Right lobe of liver (tissue), 6 donors: ENCODE measurements at regions of chr4 and their contacts with region 1.

Region 1: DNA sequence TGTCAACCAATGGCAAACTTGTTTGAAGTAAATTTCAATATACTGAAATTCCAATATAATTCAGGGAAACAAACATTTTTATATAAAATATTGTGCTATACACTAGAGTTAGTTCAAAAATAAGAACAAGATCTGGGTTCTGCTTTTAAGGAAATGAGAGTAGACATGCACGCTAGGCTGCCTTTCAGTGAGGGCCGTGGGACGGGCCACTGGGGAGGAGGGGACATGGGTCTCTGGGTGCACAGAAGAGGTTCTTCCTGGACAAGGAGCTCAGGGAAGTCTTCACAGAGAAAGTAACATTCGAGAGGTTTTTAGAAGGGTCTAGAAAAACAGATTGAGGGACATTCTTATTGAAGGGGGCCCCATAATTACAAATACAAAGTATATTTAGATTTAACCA is 64.4 kb downstream of the SHROOM3 start:
- DNase-seq: no peak
- ATAC-seq: no peak
- H3K4me3 ChIP-seq: no peak overlapping the region
- H3K27ac ChIP-seq: peak overlapping the region; percentile 47 to 90 (median 82)
- H3K4me1 ChIP-seq: peaks cover 0 to 56% (median 13%) of the 10 kb centered on the region in 4 donors
- H3K27me3 ChIP-seq: no peaks in the 10 kb centered on the region
- CTCF ChIP-seq: no peak
- POLR2A ChIP-seq: no peak

Region 2: DNA sequence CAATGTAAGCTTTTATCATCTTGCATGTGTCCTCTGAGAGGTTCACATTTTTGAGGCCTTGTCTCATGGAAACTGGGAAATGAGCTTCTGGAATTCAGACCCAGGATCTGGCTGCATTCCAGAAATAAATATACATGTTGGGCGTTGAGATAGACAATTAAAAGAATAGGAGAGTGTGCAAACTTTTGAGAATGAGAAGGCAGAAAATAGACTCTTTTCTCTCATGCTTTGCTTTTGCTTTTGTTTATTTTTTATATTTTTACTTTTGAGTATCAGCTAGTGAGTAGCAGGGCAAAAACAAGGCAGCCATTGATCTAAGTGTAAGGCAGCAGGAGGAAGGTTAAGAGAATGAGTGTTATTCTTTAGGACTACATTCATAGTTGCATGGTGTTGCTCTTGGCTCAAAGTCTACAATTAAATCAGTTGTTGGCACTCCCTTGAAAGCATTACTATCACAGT is 52.0 kb before region 1 on chr4:
- intact Hi-C with region 1: loop called in 1 of 2 experiments (anchors 10 kb)
- DNase-seq: no peak
- ATAC-seq: no peak
- H3K4me3 ChIP-seq: no peak overlapping the region
- H3K27ac ChIP-seq: peak overlapping the region in 1 of 3 donors; percentile 47
- H3K4me1 ChIP-seq: peaks cover 0 to 35% (median 14%) of the 10 kb centered on the region in 4 donors
- H3K27me3 ChIP-seq: no peaks in the 10 kb centered on the region
- CTCF ChIP-seq: no peak
- POLR2A ChIP-seq: no peak

Region 3: DNA sequence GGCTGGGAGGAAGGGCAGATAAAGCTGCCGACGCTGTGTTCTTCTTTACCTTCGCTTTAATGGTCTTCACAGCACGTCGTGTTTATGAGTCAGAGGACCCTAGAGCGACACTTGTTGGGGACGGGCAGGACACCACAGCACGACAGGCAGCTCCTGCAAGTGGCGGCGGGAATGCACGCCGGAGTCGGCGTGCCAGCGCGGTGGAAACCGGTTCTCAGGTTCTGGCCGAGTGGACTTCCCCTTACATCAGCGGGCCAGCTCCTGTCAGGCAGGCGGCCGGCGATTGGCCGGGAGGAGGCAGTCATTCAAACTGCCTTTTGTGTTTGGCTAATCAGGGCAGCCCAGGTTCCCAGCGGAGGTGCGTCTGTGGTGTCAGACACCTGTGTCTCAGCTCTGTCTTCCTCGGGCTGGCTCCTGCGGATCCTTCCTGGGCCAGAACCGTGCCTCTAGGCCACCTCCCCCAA is 86.5 kb after region 1 on chr4:
- intact Hi-C with region 1: no loop called
- DNase-seq: peak; percentile 80 to 95 (median 90)
- ATAC-seq: peak; percentile 93 to 98 (median 97)
- H3K4me3 ChIP-seq: peak overlapping the region; percentile 6 to 49 (median 14)
- H3K27ac ChIP-seq: peak overlapping the region; percentile 37 to 86 (median 67)
- H3K4me1 ChIP-seq: peaks cover 0 to 9% (median 0%) of the 10 kb centered on the region in 4 donors
- H3K27me3 ChIP-seq: no peaks in the 10 kb centered on the region
- CTCF ChIP-seq: peak in 3 of 4 donors; percentile 23 to 44 (median 35)
- POLR2A ChIP-seq: peak; percentile 63

Region 4: DNA sequence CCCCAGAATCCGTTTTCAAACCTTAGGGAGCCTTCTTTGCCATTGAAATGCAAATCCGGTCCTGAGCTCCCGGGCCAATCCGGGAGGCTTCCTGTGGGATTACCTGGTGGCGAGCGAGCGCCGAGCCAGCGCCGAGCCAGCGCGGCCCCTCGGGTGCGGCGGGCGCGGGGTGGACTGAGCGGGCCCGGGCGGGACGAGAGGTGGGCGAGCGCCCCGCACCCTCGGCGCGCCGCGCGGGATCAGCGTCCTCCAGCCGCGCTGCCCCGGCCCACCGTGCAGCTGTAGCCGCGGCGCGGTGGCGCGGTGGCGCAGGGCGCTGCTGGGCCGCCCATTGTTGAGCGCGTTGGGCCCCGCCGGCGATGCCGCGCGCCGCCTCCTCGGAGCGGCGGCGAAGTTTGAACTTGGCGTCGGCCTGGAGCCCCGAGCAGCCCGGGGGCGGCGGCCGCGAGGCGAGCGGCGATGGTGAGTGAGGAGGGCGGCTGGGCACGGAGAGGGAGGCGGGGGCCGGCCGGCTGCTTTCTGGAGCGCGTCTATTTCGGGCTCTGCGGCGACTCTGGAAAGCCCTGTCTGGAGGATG is 189.9 kb after region 1 on chr4:
- intact Hi-C with region 1: no loop called
- DNase-seq: peak; percentile 57 to 64 (median 59)
- ATAC-seq: peak; percentile 42 to 70 (median 69)
- H3K4me3 ChIP-seq: peak overlapping the region; percentile 44 to 63 (median 54)
- H3K27ac ChIP-seq: peak overlapping the region; percentile 87 to 94 (median 91)
- H3K4me1 ChIP-seq: peaks cover 0 to 33% (median 7%) of the 10 kb centered on the region in 4 donors
- H3K27me3 ChIP-seq: no peaks in the 10 kb centered on the region
- CTCF ChIP-seq: peak in 1 of 4 donors; percentile 14
- POLR2A ChIP-seq: peak; percentile 44